ENCODE measurements at regions of chr19 and their contacts with region 1.

Region 1: DNA sequence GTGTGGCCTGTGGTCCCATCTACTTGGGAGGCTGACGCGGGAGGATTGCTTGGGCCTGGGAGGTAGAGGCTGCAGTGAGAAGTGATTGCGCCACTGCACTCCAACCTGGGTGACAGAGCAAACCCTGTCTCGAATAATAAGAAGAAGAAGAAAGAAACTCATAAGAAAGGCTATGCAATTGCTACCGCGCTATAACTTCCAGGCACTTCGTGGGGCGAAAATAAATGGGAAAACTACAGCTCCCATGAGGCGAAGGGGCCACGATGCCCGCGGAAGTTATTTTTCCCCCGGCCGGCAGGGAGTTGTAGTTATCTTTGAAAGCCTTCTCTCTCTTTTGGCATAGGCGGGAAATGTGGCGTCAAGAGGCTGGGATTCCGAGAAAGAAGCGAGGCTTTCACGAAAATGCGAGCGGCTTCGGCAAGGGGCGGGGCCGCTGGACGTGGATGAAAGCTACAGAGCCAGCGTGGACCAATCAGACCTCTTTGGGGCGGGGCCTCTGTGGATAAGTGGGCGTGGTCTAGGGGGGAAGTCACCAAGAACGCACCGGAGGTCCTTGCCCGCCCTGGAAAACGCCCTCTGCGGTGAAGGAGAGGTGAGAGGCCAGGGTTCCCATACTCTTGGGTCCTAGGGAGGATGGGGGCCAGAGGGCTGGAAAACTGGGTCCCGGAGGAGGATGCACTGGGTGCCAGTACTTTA is at the start of gene NUCB1:
- DNase-seq: peak; percentile 98 to 100
- H3K4me3 ChIP-seq: peak within 1 kb of the TSS; percentile 75 to 91
- H3K27ac ChIP-seq: peak within 1 kb of the TSS; percentile 94 to 96
- H3K4me1 ChIP-seq: peaks cover 6 to 28% of the 10 kb centered on the region in 2 donors
- H3K27me3 ChIP-seq: no peaks in the 10 kb centered on the region
- CTCF ChIP-seq: peak; percentile 14 to 50 (median 31)
- total RNA-seq, gene NUCB1: 505 TPM

Region 2: GRCh38 chr19:48872182-48872883 is 27.6 kb before region 1 on chr19 and contains the start of gene PPP1R15A:
- intact Hi-C with region 1: loop called (anchors 1 kb)
- DNase-seq: peak; percentile 96 to 99
- H3K4me3 ChIP-seq: peak within 1 kb of the TSS; percentile 91 to 99
- H3K27ac ChIP-seq: peak within 1 kb of the TSS; percentile 100
- H3K4me1 ChIP-seq: peaks cover 10 to 31% of the 10 kb centered on the region in 2 donors
- H3K27me3 ChIP-seq: no peaks in the 10 kb centered on the region
- CTCF ChIP-seq: peak in 2 of 3 experiments; percentile 10 to 40
- total RNA-seq, gene PPP1R15A: 142 TPM

Region 3: DNA sequence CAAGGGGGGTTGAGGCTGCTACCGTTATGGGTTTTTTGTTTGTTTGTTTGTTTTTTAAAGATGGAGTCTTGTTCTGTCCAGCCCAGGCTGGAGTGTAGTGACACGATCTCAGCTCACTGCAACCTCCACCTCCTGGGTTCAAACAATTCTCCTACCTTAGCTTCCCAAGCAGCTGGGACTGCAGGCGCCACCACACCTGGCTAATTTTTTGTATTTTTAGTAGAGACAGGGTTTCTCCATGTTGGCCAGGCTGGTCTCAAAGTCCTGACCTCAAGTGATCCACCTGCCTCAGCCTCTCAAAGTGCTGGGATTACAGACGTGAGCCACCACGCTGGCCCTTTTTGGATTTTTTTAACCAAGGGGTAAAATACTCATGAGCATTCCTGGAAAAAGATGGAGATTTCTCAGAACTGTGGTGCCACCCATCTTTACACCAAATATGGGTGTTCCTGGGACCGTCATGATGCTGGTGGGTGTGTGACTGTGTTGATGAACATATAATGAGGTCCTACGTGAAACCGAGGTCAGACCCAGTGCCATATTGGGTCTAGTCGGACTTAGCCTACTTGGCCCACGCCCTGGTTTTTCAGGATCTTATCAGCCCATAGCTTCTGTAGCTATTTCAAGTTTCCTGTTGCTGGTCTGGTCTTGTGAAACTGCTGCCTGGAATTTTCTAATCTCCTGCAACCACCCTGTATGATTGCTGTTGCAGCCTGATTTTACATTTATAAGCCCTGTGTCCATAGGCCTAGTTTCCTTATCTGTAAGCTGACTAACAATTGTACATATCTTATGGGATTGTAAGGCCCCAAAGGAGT is 21.5 kb before region 1 on chr19:
- intact Hi-C with region 1: loop called (anchors 1 kb)
- DNase-seq: peak; percentile 68 to 94
- H3K4me3 ChIP-seq: no peak overlapping the region
- H3K27ac ChIP-seq: peak overlapping the region; percentile 100
- H3K4me1 ChIP-seq: peaks cover 14 to 41% of the 10 kb centered on the region in 2 donors
- H3K27me3 ChIP-seq: no peaks in the 10 kb centered on the region
- CTCF ChIP-seq: no peak

Region 4: GRCh38 chr19:48926909-48927308 is 27.0 kb after region 1 on chr19:
- intact Hi-C with region 1: loop called (anchors 1 kb)
- DNase-seq: peak; percentile 80 to 88
- H3K4me3 ChIP-seq: no peak overlapping the region
- H3K27ac ChIP-seq: peak overlapping the region; percentile 74 to 78
- H3K4me1 ChIP-seq: peaks cover 0 to 3% of the 10 kb centered on the region in 2 donors
- H3K27me3 ChIP-seq: no peaks in the 10 kb centered on the region
- CTCF ChIP-seq: no peak

Region 5: GRCh38 chr19:48954595-48955310 is 54.8 kb after region 1 on chr19 and contains the start of gene BAX:
- intact Hi-C with region 1: loop called (anchors 1 kb)
- DNase-seq: peak; percentile 92 to 99
- H3K4me3 ChIP-seq: peak within 1 kb of the TSS; percentile 88 to 95
- H3K27ac ChIP-seq: peak within 1 kb of the TSS; percentile 86 to 94
- H3K4me1 ChIP-seq: peaks cover 5 to 13% of the 10 kb centered on the region in 2 donors
- H3K27me3 ChIP-seq: no peaks in the 10 kb centered on the region
- CTCF ChIP-seq: no peak
- total RNA-seq, gene BAX: 182 TPM

Region 6: GRCh38 chr19:48993175-48994034 is 93.5 kb after region 1 on chr19 and contains the starts of genes GYS1 and RUVBL2:
- intact Hi-C with region 1: loop called (anchors 1 kb)
- DNase-seq: peak; percentile 99 to 100
- H3K4me3 ChIP-seq: peak within 1 kb of the TSS; percentile 58 to 81
- H3K27ac ChIP-seq: peak within 1 kb of the TSS; percentile 94
- H3K4me1 ChIP-seq: peaks cover 21 to 26% of the 10 kb centered on the region in 2 donors
- H3K27me3 ChIP-seq: no peaks in the 10 kb centered on the region
- CTCF ChIP-seq: peak; percentile 98 to 100 (median 99)
- total RNA-seq, gene GYS1: 21.8 TPM
- total RNA-seq, gene RUVBL2: 106 TPM